ENCODE measurements at regions of chr2 and their contacts with region 1.

Region 1: DNA sequence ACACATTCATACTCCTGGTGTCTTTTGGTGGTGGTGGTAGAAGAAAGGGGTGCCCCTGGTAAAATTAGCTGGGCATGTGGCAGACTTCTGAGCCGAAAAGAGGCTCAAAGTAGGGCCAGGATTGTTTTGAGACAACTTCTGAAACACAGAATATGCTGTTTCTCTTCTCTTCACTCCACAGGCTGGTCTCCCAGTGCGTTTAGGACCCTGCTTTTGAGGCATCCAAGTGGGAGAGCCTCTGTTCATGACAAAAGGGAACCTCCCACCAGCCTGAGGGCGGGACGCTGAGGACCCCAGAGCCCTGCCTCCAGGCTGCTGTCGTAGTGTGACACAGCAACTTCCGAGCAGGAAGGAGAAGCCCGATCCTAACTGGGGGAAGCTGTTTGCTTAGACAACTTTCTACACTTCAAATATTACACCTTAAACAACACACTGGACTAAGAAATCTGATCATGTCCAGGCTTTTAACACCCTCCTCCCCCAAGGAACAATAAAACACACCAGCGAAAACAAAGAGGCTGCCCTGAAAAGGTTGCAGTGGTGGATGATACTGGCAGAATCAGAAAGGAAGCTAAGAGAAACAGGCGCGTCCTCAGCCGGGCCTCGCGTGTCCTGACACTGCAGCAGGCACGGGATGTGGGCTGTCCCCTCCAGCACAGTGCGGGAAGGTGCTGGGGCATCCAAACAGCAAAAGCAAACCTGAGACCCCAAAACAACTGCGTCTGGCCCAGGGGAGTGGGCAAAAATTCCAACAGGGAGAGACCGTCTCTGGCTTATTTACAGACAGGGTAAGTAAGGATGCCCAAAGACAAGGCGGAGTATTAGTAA is 9.3 kb downstream of the SERTAD2 start:
- DNase-seq: peak; percentile 91 to 95
- ATAC-seq: peak; percentile 85 to 94
- H3K4me3 ChIP-seq: peak overlapping the region; percentile 44
- H3K27ac ChIP-seq: peak overlapping the region; percentile 93 to 95
- H3K4me1 ChIP-seq: peaks cover 87% of the 10 kb centered on the region
- CTCF ChIP-seq: no peak; the same call in 2 of the 3 replicates
- EP300 ChIP-seq: no peak
- POLR2A ChIP-seq: peak; percentile 56
- RAD21 ChIP-seq: no peak

Region 2: DNA sequence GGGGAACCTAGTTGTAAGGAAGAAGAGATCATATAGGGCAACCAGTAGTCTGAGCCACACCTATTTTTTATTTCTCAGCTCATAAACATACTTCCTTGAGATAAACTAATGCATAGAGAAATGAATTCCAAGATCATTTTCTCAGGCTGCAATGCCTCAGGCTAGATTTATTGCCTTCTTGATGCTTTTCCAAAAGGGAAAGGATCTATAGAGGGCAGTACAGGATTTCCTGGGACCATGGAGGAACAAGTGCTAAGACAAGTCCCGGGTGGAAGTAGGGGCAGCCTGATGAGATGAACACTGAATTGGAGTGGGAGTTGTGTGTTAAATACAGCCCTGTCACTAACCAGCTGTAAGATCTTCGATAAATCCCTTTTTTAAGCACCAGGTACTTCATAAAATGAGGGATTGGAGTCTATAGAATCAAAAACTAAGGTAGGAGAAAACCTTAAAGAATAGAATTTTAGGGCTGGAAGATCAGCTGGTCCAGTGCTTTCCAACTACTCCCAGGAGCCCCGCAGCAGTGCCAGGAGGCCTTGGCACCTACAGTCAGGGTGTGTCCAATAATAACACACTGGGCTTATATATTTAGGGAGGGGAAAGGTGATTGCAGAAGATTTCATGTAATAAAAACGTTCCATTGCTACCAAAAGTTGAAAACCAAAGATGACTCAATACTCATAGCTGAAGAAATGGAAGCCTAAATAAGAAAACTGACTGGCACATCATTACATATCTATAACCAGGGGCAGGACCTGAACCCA is 48.8 kb before region 1 on chr2:
- CTCF ChIA-PET with region 1: interaction called, 19 read pairs
- POLR2A ChIA-PET with region 1: interaction called, 4 read pairs
- DNase-seq: peak in 1 of 2 experiments; percentile 38
- ATAC-seq: peak; percentile 43 to 72; a peak in 3 of 6 replicates
- H3K4me3 ChIP-seq: no peak overlapping the region
- H3K27ac ChIP-seq: no peak overlapping the region
- H3K4me1 ChIP-seq: peaks cover 21% of the 10 kb centered on the region; the same call in 1 of the 3 replicates
- CTCF ChIP-seq: peak; percentile 46
- EP300 ChIP-seq: no peak
- POLR2A ChIP-seq: no peak
- RAD21 ChIP-seq: peak; percentile 55 to 72

Region 3: DNA sequence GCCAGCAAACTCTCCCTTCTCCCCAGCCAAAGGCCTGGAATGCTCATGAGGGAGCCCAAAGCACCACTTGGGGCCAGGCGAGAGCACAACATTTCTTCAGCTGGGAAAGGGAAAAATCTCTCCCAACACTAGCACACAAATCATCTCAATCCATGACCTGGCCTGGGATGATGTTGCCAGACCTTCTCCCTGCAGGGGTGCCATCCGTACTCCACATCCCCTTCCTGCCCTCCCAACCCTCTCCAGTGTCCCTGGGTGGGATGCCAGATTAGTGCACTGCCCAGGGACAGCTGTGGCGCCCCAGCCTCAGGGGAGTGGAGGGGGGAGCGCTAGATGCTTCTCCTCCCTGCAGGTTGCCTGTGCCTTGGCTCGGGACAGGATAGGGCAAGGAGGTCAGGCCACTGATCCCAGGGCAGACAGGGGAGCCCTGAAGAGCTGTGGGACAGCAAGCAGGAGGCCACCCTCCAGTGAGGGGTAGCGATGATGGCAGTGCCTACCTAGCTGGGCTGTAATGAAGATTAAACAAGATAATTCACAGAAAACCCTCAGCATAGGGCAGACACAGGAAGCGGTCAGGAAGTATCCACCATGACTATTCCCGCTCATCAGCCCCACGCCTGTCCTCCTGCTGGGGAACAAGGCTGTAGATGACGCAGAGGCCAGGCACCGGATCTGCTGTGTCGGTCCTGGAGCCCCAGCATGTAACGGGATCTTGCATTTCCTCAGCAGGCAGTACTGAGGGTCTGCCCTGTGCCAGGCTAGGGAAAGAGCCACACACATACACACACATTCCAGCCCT is 21.7 kb before region 1 on chr2:
- CTCF ChIA-PET with region 1: interaction called, 13 read pairs
- POLR2A ChIA-PET with region 1: no interaction called
- DNase-seq: no peak
- ATAC-seq: peak in 1 of 2 experiments; percentile 8; a peak in 2 of 6 replicates
- H3K4me3 ChIP-seq: no peak overlapping the region
- H3K27ac ChIP-seq: no peak overlapping the region
- H3K4me1 ChIP-seq: no peaks in the 10 kb centered on the region
- CTCF ChIP-seq: no peak
- EP300 ChIP-seq: no peak
- POLR2A ChIP-seq: no peak
- RAD21 ChIP-seq: no peak

Region 4: GRCh38 chr2:64742678-64743077 is 98.3 kb after region 1 on chr2:
- CTCF ChIA-PET with region 1: interaction called, 13 read pairs
- POLR2A ChIA-PET with region 1: interaction called, 3 read pairs
- DNase-seq: no peak
- ATAC-seq: no peak
- H3K4me3 ChIP-seq: no peak overlapping the region
- H3K27ac ChIP-seq: no peak overlapping the region
- H3K4me1 ChIP-seq: peaks cover 16% of the 10 kb centered on the region
- CTCF ChIP-seq: no peak
- EP300 ChIP-seq: no peak
- POLR2A ChIP-seq: no peak
- RAD21 ChIP-seq: no peak

Region 5: GRCh38 chr2:64852771-64853705 is 208.6 kb after region 1 on chr2:
- CTCF ChIA-PET with region 1: interaction called, 37 read pairs
- POLR2A ChIA-PET with region 1: no interaction called
- DNase-seq: no peak
- ATAC-seq: no peak
- H3K4me3 ChIP-seq: no peak overlapping the region
- H3K27ac ChIP-seq: no peak overlapping the region
- H3K4me1 ChIP-seq: peaks cover 6% of the 10 kb centered on the region; the same call in 1 of the 3 replicates
- CTCF ChIP-seq: no peak
- EP300 ChIP-seq: no peak
- POLR2A ChIP-seq: no peak
- RAD21 ChIP-seq: no peak

Region 6: GRCh38 chr2:64873472-64873924 is 229.1 kb after region 1 on chr2:
- CTCF ChIA-PET with region 1: interaction called, 65 read pairs
- POLR2A ChIA-PET with region 1: no interaction called
- DNase-seq: peak; percentile 65 to 73
- ATAC-seq: peak; percentile 83 to 94
- H3K4me3 ChIP-seq: no peak overlapping the region
- H3K27ac ChIP-seq: no peak overlapping the region
- H3K4me1 ChIP-seq: peaks cover 15% of the 10 kb centered on the region
- CTCF ChIP-seq: peak; percentile 95
- EP300 ChIP-seq: no peak
- POLR2A ChIP-seq: no peak
- RAD21 ChIP-seq: peak; percentile 94 to 97

Measured in A549 (cell line).